ENCODE measurements at regions of chr11 and their contacts with region 1.

Region 1: DNA sequence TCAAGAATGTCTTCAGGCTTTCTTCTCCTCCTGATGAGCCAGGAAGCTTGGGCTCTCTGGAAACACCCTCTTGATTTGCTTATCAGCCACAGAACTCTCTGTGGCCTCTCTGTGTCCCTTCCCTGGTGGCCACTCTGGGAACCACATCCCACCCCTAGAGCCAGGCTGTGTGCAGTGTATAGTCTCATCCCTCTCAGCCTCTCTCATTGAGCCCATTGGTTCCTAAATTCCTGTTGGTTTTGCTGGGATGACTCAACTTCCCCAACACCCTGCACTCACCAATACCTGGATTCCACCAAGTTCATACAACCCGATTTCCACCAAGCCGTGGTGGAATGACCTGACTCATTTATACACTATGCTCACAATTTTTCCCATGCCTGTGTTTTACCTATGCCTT is 5.2 kb downstream of the IRAG1 start:
- DNase-seq: no peak
- H3K4me3 ChIP-seq: no peak overlapping the region
- H3K27ac ChIP-seq: no peak overlapping the region
- H3K4me1 ChIP-seq: 0 out of 7 replicates have a peak, but pooled peaks cover 0 to 5% (median 0%) of the 10 kb centered on the region in 4 experiments
- H3K27me3 ChIP-seq: no peaks in the 10 kb centered on the region
- CTCF ChIP-seq: peak; percentile 31 to 60 (median 58); a peak in 2 of 4 replicates
- EP300 ChIP-seq: no peak
- POLR2A ChIP-seq: no peak
- RAD21 ChIP-seq: no peak; a peak in 1 of 4 replicates

Region 2: GRCh38 chr11:10674911-10675440 is 13.4 kb before region 1 on chr11:
- CTCF ChIA-PET with region 1: interaction called, 15 read pairs
- POLR2A ChIA-PET with region 1: no interaction called
- DNase-seq: no peak
- H3K4me3 ChIP-seq: no peak overlapping the region
- H3K27ac ChIP-seq: no peak overlapping the region
- H3K4me1 ChIP-seq: peaks cover 0 to 6% (median 3%) of the 10 kb centered on the region in 4 experiments; a peak in 2 of 7 replicates
- H3K27me3 ChIP-seq: no peaks in the 10 kb centered on the region
- CTCF ChIP-seq: no peak
- EP300 ChIP-seq: no peak
- POLR2A ChIP-seq: no peak
- RAD21 ChIP-seq: no peak

Region 3: DNA sequence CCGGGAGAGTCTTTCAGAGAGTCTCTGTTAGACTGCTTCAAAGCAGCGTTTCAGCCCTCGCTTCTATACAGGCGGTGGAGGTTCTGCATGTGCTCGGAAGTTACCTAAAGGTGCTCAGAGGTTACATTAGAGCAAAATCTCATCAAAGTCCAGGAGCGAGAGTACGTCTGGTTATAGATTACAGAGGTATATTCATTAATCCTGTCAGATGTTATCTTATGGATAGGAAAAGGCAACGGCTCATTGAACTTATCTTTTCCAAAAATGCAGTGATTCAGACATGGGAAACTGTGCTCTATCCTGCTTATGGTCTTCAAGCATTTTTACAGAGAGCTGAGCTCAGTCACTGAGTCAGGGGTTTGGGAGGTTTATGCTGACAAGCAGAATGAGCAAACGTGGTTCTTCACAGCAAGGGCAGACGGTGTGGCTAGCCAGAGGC is 178.5 kb after region 1 on chr11:
- CTCF ChIA-PET with region 1: no interaction called
- POLR2A ChIA-PET with region 1: no interaction called
- DNase-seq: no peak
- H3K4me3 ChIP-seq: no peak overlapping the region
- H3K27ac ChIP-seq: no peak overlapping the region
- H3K4me1 ChIP-seq: no peaks in the 10 kb centered on the region
- H3K27me3 ChIP-seq: no peaks in the 10 kb centered on the region
- CTCF ChIP-seq: no peak
- EP300 ChIP-seq: no peak
- POLR2A ChIP-seq: no peak
- RAD21 ChIP-seq: no peak

Region 4: GRCh38 chr11:11313426-11313825 is 625.0 kb after region 1 on chr11:
- CTCF ChIA-PET with region 1: no interaction called
- POLR2A ChIA-PET with region 1: no interaction called
- DNase-seq: no peak
- H3K4me3 ChIP-seq: no peak overlapping the region
- H3K27ac ChIP-seq: no peak overlapping the region
- H3K4me1 ChIP-seq: no peaks in the 10 kb centered on the region
- H3K27me3 ChIP-seq: 0 out of 7 replicates have a peak, but pooled peaks cover 0 to 2% (median 0%) of the 10 kb centered on the region in 4 experiments
- CTCF ChIP-seq: no peak
- EP300 ChIP-seq: no peak
- POLR2A ChIP-seq: no peak
- RAD21 ChIP-seq: no peak

Measured in H1 (cell line).